Heart left ventricle (tissue), 16 donors: ENCODE measurements at regions of chr16 and their contacts with region 1.

Region 1: DNA sequence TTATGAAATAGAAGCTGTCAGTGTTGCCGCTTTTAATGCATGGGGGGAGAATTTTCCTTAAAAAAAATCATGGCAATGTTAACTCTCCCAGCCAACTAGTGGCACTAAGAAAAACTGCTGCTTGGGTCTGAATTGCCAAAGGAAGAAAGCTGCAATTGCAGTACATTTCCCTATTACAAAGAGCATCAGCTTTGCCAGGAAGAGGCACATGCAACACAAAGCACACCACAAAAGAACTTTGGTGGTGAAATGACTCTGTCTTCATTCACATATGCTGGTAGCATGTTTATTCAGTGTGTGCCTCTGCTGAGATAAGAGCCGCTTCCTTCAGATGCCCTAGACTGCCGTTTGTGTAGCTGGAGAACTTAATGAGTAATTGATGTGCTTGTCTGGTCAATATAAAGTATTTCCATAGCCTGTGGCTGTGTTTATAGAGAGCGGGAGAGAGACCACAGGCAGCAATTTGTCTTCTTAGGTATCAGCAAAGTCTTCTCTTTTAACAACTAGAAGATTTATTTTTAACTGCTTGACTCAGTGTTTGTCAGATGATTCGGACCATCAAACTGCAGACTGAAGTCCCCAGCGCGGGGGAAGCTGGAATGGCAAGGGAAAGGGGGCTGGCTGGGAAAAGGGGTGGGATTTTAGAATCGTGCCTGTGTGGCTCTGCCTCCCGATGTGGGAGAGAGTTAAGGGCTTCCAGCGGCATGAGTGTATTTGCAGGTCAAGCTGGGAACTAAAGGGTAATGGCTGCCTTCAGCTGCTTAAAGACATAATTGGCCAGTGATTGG is 115.1 kb downstream of the MRTFB start:
- DNase-seq: peak in 4 of 5 donors; percentile 37 to 60 (median 46)
- ATAC-seq: peak; percentile 59 to 75 (median 64)
- H3K4me3 ChIP-seq: peak overlapping the region in 11 of 12 donors; percentile 28 to 65 (median 51)
- H3K27ac ChIP-seq: peak overlapping the region; percentile 62 to 85 (median 75)
- H3K4me1 ChIP-seq: peaks cover 0 to 67% (median 36%) of the 10 kb centered on the region in 12 donors
- H3K27me3 ChIP-seq: no peaks in the 10 kb centered on the region
- CTCF ChIP-seq: peak; percentile 16 to 58 (median 45)
- POLR2A ChIP-seq: peak in 1 of 2 donors; percentile 44

Region 2: DNA sequence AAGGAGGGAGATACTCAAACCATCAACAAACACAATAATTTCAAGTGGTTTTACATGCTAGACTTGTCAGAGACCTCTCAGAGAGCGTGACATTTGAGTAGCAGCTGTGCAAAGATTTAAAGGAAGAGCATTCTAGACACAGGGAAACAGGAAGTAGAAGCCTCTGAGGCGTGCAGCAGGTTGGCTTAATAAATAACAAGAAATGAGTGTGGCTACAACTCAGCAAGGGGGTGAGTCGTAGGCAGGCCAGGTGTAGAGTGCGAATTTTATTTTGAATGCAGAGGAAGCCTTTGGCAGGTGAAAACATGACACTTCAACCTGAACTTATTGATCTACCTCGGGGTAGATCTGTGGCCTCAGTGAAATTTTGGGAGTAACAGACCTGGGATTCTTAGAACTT is 188.3 kb before region 1 on chr16:
- intact Hi-C with region 1: loop called in 6 of 10 experiments (anchors 5 to 10 kb)
- DNase-seq: no peak
- ATAC-seq: no peak
- H3K4me3 ChIP-seq: no peak overlapping the region
- H3K27ac ChIP-seq: peak overlapping the region in 8 of 12 donors; percentile 14 to 90 (median 82)
- H3K4me1 ChIP-seq: peaks cover 0 to 70% (median 47%) of the 10 kb centered on the region in 12 donors
- H3K27me3 ChIP-seq: no peaks in the 10 kb centered on the region
- CTCF ChIP-seq: no peak
- POLR2A ChIP-seq: no peak

Region 3: DNA sequence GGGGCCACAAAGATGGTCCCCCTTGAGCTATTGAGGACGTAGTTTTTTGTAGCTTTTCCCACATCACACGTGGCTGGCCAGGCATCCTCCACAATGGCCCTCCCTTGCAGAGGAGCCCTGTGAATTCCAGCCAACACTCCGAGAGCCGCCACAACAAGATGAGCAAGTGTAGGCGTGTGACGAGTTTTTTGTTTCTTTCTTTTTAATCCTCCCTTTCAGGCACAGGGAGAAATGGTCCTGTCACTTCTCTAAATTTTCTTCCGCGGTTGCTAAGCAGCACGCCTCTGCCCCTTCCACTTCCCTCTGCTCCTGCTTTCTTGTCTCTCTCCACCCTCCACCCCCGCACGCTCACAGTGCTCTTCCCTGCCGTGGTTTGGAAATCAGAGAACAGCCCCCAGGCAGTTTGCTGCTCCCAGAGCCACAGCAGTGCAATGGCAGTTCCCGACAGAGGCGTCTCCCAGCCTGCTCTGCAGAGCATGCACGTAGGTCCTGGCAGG is 183.1 kb before region 1 on chr16:
- intact Hi-C with region 1: loop called in 6 of 10 experiments (anchors 5 to 10 kb)
- DNase-seq: peak; percentile 74 to 83 (median 78)
- ATAC-seq: peak; percentile 41 to 75 (median 74)
- H3K4me3 ChIP-seq: peak overlapping the region in 11 of 12 donors; percentile 6 to 51 (median 37)
- H3K27ac ChIP-seq: peak overlapping the region in 11 of 12 donors; percentile 27 to 85 (median 74)
- H3K4me1 ChIP-seq: peaks cover 0 to 70% (median 47%) of the 10 kb centered on the region in 12 donors
- H3K27me3 ChIP-seq: no peaks in the 10 kb centered on the region
- CTCF ChIP-seq: peak in 6 of 12 donors; percentile 6 to 37 (median 24)
- POLR2A ChIP-seq: no peak

Region 4: DNA sequence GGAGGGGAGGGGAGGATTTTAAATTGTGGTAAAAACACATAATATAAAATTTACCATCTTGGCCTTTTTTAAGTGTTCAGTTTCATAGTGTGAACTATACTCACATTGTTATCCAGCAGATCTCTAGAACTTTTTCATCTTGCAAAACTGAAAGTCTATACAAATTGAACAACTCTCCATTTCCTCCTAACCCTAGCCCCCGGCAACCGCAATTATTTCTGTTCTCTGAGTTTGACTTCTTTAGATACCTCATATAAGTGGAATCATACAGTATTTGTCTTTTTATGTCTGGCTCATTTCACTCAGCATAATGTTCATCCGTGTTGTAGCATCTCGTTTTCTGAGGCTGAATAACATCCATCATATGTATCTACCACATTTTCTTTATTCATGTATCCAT is 145.0 kb before region 1 on chr16:
- intact Hi-C with region 1: no loop called
- DNase-seq: no peak
- ATAC-seq: no peak
- H3K4me3 ChIP-seq: no peak overlapping the region
- H3K27ac ChIP-seq: peak overlapping the region in 1 of 12 donors; percentile 9
- H3K4me1 ChIP-seq: peaks cover 0 to 23% (median 0%) of the 10 kb centered on the region in 12 donors
- H3K27me3 ChIP-seq: no peaks in the 10 kb centered on the region
- CTCF ChIP-seq: no peak
- POLR2A ChIP-seq: no peak

Region 5: GRCh38 chr16:14088155-14088753 is 97.9 kb before region 1 on chr16:
- intact Hi-C with region 1: loop called in 3 of 10 experiments (anchors 5 to 10 kb)
- DNase-seq: peak in 1 of 5 donors; percentile 41
- ATAC-seq: peak; percentile 72 to 87 (median 81)
- H3K4me3 ChIP-seq: no peak overlapping the region
- H3K27ac ChIP-seq: peak overlapping the region in 2 of 12 donors; percentile 12 to 55
- H3K4me1 ChIP-seq: peaks cover 0 to 59% (median 25%) of the 10 kb centered on the region in 12 donors
- H3K27me3 ChIP-seq: no peaks in the 10 kb centered on the region
- CTCF ChIP-seq: no peak
- POLR2A ChIP-seq: no peak

Region 6: DNA sequence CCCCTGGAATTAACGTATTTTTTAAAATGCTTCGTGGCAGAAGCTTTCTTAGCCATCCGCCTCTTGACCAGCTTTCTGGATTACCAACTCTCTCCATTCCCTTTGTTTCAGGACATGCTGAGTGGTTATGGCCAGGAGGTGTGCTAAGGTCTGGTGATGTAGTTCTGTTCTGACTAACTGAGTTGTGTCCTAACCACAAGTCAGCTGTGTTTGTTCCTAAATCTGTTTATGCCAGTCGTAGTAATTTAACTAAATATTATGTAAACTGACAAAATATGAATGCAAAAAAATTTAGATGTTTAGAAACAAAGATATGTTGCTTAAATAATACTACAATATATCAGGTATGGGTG is 53.5 kb before region 1 on chr16:
- intact Hi-C with region 1: loop called in 1 of 10 experiments (anchors 5 kb)
- DNase-seq: no peak
- ATAC-seq: no peak
- H3K4me3 ChIP-seq: no peak overlapping the region
- H3K27ac ChIP-seq: no peak overlapping the region
- H3K4me1 ChIP-seq: peaks cover 0 to 25% (median 7%) of the 10 kb centered on the region in 12 donors
- H3K27me3 ChIP-seq: no peaks in the 10 kb centered on the region
- CTCF ChIP-seq: no peak
- POLR2A ChIP-seq: no peak

Region 7: GRCh38 chr16:14140923-14141322 is 45.3 kb before region 1 on chr16:
- intact Hi-C with region 1: loop called in 1 of 10 experiments (anchors 5 kb)
- DNase-seq: no peak
- ATAC-seq: no peak
- H3K4me3 ChIP-seq: no peak overlapping the region
- H3K27ac ChIP-seq: no peak overlapping the region
- H3K4me1 ChIP-seq: peaks cover 0 to 7% (median 0%) of the 10 kb centered on the region in 12 donors
- H3K27me3 ChIP-seq: no peaks in the 10 kb centered on the region
- CTCF ChIP-seq: no peak
- POLR2A ChIP-seq: no peak

Region 8: DNA sequence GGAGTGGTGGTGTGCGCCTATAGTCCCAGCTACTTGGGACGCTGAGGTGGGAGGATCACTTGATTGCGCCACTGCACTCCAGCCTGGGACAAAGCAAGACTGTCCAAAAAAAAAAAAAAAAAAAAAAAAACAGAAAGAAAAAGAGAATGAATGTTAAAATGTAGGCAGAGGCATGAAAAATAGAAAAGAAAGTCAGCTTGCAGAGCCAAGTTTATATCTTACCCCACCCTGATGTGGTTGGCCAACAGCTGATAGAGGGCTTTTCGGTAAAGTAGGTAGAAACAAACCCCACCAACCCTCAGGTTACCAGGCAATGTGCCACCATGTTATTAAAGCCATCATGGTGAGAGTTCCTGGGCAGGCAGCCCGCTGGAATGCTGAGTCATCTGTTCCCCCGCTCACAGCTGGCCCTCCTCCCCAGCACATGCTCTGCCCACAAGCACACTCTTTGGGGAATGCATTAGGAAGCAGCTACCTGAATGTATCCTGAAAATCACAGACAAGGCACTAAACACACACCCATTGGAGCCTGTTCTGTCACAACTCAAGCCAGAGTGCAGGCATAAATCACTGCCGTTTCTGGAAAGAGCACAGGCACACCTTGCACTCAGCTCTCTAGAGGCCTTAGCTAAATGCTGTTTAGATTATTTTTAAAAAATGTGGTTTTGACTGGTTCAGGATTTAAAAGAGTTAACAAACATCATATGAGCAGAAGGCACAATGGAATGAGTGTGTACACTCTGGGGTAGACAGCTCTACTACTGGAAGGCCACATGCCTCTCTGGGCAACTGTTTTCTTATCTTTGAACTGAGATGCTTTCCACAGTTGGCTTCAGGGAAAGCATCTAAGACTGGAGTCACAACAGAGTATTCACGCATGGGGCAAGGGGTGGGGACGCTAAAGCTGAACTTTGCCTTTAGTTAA is 315.4 kb after region 1 on chr16:
- intact Hi-C with region 1: no loop called
- DNase-seq: peak; percentile 79 to 90 (median 83)
- ATAC-seq: peak; percentile 89 to 95 (median 90)
- H3K4me3 ChIP-seq: no peak overlapping the region
- H3K27ac ChIP-seq: peak overlapping the region; percentile 19 to 86 (median 76)
- H3K4me1 ChIP-seq: peaks cover 0 to 65% (median 26%) of the 10 kb centered on the region in 12 donors
- H3K27me3 ChIP-seq: no peaks in the 10 kb centered on the region
- CTCF ChIP-seq: no peak
- POLR2A ChIP-seq: no peak